Calu3 (cell line): ENCODE measurements at regions of chr20 and their contacts with region 1.

Region 1: DNA sequence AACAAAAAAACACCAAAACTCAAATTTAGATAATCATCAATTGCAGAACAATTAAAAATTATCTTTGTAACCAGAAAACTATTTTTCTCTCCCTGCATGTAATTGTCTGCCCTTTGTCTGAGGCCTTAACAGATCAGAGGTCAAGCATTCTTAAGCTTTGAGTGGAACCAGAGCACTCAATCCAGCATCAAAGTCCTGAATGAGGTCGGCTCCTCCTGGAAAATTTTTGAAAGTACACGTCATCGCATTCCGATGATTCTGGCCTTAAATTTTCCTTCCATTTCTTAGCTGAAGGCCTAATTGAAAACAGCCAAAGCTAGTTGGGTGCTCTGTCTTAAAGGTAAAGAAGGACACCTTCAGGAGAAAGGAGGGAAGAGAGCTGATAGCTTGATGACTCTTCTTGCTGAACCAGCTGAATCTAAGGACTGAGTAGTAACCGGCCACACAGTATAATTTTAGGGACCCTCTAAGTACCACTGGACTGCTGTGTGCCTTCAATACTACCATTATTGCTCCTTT is 510.2 kb upstream of the SULF2 start:
- DNase-seq: peak; percentile 79
- H3K4me3 Mint-ChIP-seq: no peak overlapping the region
- H3K27ac Mint-ChIP-seq: peak overlapping the region; percentile 75
- H3K4me1 Mint-ChIP-seq: peaks cover 75% of the 10 kb centered on the region
- H3K27me3 Mint-ChIP-seq: peaks cover 4% of the 10 kb centered on the region
- CTCF ChIP-seq: peak; percentile 54

Region 2: GRCh38 chr20:47677635-47678453 is 617.7 kb before region 1 on chr20:
- CTCF ChIA-PET with region 1: interaction called, 5 read pairs
- intact Hi-C with region 1: loop called (anchors 5 kb)
- DNase-seq: peak; percentile 87
- H3K4me3 Mint-ChIP-seq: no peak overlapping the region
- H3K27ac Mint-ChIP-seq: no peak overlapping the region
- H3K4me1 Mint-ChIP-seq: no peaks in the 10 kb centered on the region
- H3K27me3 Mint-ChIP-seq: no peaks in the 10 kb centered on the region
- CTCF ChIP-seq: peak; percentile 98

Region 3: GRCh38 chr20:47785854-47786764 is 509.4 kb before region 1 on chr20:
- CTCF ChIA-PET with region 1: interaction called, 31 read pairs
- intact Hi-C with region 1: loop called (anchors 1 kb)
- DNase-seq: peak; percentile 91
- H3K4me3 Mint-ChIP-seq: peak overlapping the region; percentile 84
- H3K27ac Mint-ChIP-seq: peak overlapping the region; percentile 88
- H3K4me1 Mint-ChIP-seq: peaks cover 38% of the 10 kb centered on the region
- H3K27me3 Mint-ChIP-seq: no peaks in the 10 kb centered on the region
- CTCF ChIP-seq: peak; percentile 93

Region 4: DNA sequence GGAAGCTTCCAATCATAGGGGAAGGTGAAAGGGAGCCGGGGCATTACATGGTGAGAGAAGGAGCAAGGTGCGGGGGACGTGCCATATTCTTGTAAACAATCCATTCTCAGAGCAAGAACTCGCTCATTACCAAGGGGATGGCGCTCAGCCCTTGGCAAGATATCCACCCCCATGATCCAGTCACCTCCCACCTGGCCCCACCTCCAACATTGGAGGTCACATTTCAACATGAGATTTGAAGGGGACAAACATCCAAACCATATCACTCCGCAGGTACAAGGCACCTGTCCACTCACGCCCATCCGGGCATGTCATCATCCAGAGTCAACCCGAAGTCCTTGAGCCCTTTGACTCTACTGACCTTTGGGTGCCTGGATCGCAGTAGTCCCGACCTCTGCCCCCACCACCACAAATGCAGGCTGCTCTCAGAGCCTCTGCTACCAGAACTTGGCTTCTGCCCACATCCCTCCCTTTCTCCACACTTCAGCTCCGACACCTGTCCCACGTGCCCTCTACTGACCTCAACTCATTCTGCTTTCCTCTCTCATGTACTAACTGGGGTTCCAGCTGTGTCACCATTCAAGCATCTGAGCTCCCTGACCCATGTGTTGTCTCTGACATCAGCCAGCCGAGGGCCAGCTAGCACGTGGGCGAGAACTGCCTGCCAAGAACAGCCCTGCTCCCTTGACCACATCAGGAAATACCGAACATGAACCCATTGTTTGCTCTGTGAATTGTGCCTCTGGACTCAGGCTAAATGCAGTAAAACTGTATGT is 12.0 kb before region 1 on chr20:
- CTCF ChIA-PET with region 1: interaction called, 11 read pairs
- intact Hi-C with region 1: no loop called
- DNase-seq: peak; percentile 91
- H3K4me3 Mint-ChIP-seq: peak overlapping the region; percentile 2
- H3K27ac Mint-ChIP-seq: peak overlapping the region; percentile 51
- H3K4me1 Mint-ChIP-seq: peaks cover 55% of the 10 kb centered on the region
- H3K27me3 Mint-ChIP-seq: no peaks in the 10 kb centered on the region
- CTCF ChIP-seq: no peak

Region 5: DNA sequence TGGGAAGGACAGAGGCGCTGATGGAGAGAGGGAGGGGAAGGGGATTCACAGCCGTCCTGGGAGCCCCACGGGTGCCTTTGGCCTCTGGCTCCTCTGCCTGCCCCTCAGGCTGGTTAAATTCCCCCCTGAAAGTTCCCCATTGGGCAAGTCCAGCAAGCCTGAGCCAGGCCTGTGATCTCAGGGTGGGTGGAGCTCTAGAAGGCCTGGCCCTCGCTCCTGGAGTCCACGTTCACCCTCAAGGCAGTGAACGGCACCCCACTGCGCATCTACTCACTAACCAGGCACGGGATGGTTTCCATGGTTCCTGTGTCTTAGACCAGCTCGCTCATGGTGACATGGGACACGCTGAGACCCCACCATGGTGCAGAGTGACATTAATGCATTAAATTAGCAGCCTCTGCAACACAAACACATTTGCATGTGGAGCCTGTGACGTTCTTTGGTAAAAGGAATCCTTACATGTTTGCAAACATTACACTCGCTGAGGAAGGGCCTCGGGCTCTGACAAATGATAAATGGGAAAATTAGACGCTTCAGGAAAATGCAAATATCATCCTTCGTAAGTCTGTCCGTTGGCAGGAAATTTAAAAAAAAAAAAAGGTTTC is 79.6 kb after region 1 on chr20:
- CTCF ChIA-PET with region 1: interaction called, 5 read pairs
- intact Hi-C with region 1: loop called (anchors 2 kb)
- DNase-seq: no peak
- H3K4me3 Mint-ChIP-seq: peak overlapping the region; percentile 68
- H3K27ac Mint-ChIP-seq: peak overlapping the region; percentile 99
- H3K4me1 Mint-ChIP-seq: peaks cover 83% of the 10 kb centered on the region
- H3K27me3 Mint-ChIP-seq: no peaks in the 10 kb centered on the region
- CTCF ChIP-seq: no peak